ENCODE measurements at regions of chr7 and their contacts with region 1.

Region 1: DNA sequence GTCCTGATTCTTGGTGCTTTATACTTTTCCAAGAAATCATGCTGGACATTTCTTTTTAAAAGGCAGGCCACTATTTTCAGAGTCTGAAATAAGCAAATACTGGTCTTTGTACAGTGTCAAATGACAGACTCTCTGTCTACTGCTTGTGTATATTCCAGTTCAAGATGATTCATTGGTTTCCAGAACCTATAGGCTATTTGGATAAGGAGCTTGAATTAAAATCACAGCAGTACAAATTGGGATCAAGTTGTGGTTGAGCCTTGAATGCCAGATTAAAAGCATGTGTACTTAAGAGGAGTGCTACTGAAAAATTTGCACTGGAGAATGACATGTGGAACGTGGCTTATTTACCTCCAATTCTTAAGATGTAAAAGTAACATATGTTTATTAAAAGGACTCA is 10.7 kb downstream of the KMT2E start:
- DNase-seq: no peak
- ATAC-seq: no peak
- H3K4me3 ChIP-seq: no peak overlapping the region
- H3K4me3 Mint-ChIP-seq: peak overlapping the region; percentile 57
- H3K27ac ChIP-seq: no peak overlapping the region
- H3K27ac Mint-ChIP-seq: peak overlapping the region; percentile 65 to 84
- H3K4me1 ChIP-seq: peaks cover 36% of the 10 kb centered on the region
- H3K4me1 Mint-ChIP-seq: peaks cover 79 to 86% of the 10 kb centered on the region in 2 donors
- H3K27me3 ChIP-seq: no peaks in the 10 kb centered on the region
- H3K27me3 Mint-ChIP-seq: no peaks in the 10 kb centered on the region
- CTCF ChIP-seq: no peak

Region 2: GRCh38 chr7:105036217-105037168 is 11.8 kb after region 1 on chr7:
- intact Hi-C with region 1: loop called (anchors 1 kb)
- DNase-seq: no peak
- ATAC-seq: peak in 1 of 3 donors; percentile 14
- H3K4me3 ChIP-seq: no peak overlapping the region
- H3K4me3 Mint-ChIP-seq: peak overlapping the region; percentile 17
- H3K27ac ChIP-seq: no peak overlapping the region
- H3K27ac Mint-ChIP-seq: peak overlapping the region; percentile 62
- H3K4me1 ChIP-seq: peaks cover 31% of the 10 kb centered on the region
- H3K4me1 Mint-ChIP-seq: peaks cover 44 to 46% of the 10 kb centered on the region in 2 donors
- H3K27me3 ChIP-seq: no peaks in the 10 kb centered on the region
- H3K27me3 Mint-ChIP-seq: no peaks in the 10 kb centered on the region
- CTCF ChIP-seq: no peak